Transverse colon (tissue), 4 donors: ENCODE measurements at regions of chr17 and their contacts with region 1.

Region 1: GRCh38 chr17:47902039-47902744 is 6.2 kb downstream of the SP2 start:
- DNase-seq: no peak
- H3K4me3 ChIP-seq: no peak overlapping the region
- H3K27ac ChIP-seq: no peak overlapping the region
- H3K4me1 ChIP-seq: peaks cover 22 to 39% (median 23%) of the 10 kb centered on the region in 4 donors
- H3K27me3 ChIP-seq: no peaks in the 10 kb centered on the region
- CTCF ChIP-seq: no peak
- EP300 ChIP-seq: no peak
- POLR2A ChIP-seq: no peak

Region 2: DNA sequence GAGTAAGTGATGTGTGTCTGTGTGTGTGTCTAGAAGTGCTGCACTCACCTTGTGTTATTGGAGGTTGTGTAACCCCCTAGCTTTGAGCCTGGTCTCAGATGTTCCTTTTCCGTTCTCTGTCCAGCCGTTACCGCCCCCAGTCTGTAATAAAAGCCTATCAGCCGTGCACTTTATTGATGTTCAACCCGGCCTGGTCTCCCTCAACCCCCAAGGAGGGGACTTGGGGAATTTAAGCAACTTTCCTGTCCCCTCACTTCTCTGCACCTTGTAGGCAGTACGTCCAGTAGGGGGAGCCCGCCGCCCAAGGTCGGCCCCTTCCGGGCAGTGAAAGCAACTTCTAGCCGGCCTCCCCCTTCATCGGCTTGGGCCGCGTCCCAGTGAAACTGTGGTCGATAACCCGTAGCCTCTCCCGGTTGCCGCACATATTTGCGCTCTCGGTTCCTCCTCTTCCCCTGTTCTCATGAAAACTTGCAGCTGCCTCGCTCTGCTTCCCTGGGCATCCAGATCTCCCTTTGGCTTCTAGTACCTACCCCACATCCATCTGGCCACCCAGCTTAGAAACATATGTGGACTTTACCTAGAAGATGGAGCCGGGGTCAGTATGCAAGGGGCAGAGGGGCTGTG is 47.1 kb after region 1 on chr17:
- in situ Hi-C with region 1: no loop called
- intact Hi-C with region 1: loop called (anchors 5 kb)
- DNase-seq: peak; percentile 95
- H3K4me3 ChIP-seq: peak overlapping the region in 3 of 4 donors; percentile 9 to 25 (median 12)
- H3K27ac ChIP-seq: peak overlapping the region; percentile 88 to 93 (median 90)
- H3K4me1 ChIP-seq: peaks cover 20 to 80% (median 60%) of the 10 kb centered on the region in 4 donors
- H3K27me3 ChIP-seq: no peaks in the 10 kb centered on the region
- CTCF ChIP-seq: peak; percentile 90 to 95 (median 92)
- EP300 ChIP-seq: no peak
- POLR2A ChIP-seq: peak; percentile 57